A673 (cell line): ENCODE measurements at regions of chr17 and their contacts with region 1.

Region 1: GRCh38 chr17:58333736-58334207 is 5.2 kb upstream of the TSPOAP1 start:
- DNase-seq: no peak
- H3K4me3 ChIP-seq: no peak overlapping the region
- H3K27ac ChIP-seq: no peak overlapping the region
- H3K4me1 ChIP-seq: peaks cover 15% of the 10 kb centered on the region
- H3K27me3 ChIP-seq: no peaks in the 10 kb centered on the region
- CTCF ChIP-seq: no peak

Region 2: DNA sequence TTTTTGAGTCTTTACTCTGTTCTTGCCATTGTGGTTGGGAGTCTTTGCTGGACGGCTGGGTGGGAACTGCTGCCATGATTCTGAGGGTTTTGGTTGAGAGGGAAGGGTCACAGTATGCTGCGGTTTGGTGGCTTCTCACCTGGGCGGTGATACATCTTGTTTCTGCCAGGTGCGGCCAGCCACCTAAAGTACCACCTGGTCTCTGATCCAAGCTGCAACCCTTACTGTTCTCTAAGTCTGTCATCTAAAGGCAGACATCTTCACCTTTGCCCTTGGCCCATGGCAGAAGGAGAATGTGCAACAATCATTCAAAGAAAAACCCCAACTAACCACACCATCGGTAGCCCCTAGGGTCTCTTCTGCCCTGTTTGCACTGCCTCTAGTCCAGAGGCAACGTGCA is 33.4 kb before region 1 on chr17:
- CTCF ChIA-PET with region 1: no interaction called
- POLR2A ChIA-PET with region 1: no interaction called
- intact Hi-C with region 1: no loop called
- DNase-seq: no peak
- H3K4me3 ChIP-seq: no peak overlapping the region
- H3K27ac ChIP-seq: no peak overlapping the region
- H3K4me1 ChIP-seq: no peaks in the 10 kb centered on the region
- H3K27me3 ChIP-seq: peaks cover 22% of the 10 kb centered on the region
- CTCF ChIP-seq: no peak

Region 3: DNA sequence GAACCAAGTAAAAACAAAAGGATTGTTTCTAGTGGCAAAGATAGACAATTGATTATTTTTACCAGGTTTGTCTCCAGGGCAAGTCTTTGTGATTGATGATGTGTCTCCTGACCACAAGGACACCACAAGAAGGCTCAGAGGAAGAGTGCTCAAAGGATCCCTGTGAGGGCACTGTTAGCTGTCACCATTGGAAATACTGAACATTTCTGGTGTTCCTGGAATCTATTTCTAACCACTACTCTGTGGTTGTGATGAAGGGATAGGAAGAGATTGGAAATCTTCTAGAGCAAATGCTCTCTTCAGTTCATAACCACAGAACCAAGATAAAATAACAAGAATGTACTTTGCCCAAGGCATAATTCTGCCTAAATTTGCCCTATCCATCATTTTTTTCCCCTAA is 68.3 kb after region 1 on chr17:
- CTCF ChIA-PET with region 1: no interaction called
- POLR2A ChIA-PET with region 1: interaction called, 14 read pairs
- intact Hi-C with region 1: no loop called
- DNase-seq: no peak
- H3K4me3 ChIP-seq: no peak overlapping the region
- H3K27ac ChIP-seq: no peak overlapping the region
- H3K4me1 ChIP-seq: no peaks in the 10 kb centered on the region
- H3K27me3 ChIP-seq: peaks cover 46% of the 10 kb centered on the region
- CTCF ChIP-seq: no peak